ENCODE measurements at regions of chr6 and their contacts with region 1.

Region 1: GRCh38 chr6:33410050-33410710 is 634 bp upstream of the PHF1 start:
- DNase-seq: peak; percentile 96
- ATAC-seq: peak; percentile 94
- H3K4me3 ChIP-seq: peak overlapping the region; percentile 45 to 86 (median 85); a peak in 5 of 6 replicates
- H3K27ac ChIP-seq: peak overlapping the region; percentile 85
- H3K4me1 ChIP-seq: peaks cover 25% of the 10 kb centered on the region
- H3K27me3 ChIP-seq: no peaks in the 10 kb centered on the region
- CTCF ChIP-seq: peak; percentile 33
- EP300 ChIP-seq: no peak
- POLR2A ChIP-seq: peak in 1 of 2 experiments; percentile 10; a peak in 1 of 4 replicates
- RAD21 ChIP-seq: peak; percentile 25; the same call in 1 of the 2 replicates

Region 2: GRCh38 chr6:33075568-33076405 is 334.4 kb before region 1 on chr6 and contains the start of gene HLA-DPB1:
- CTCF ChIA-PET with region 1: no interaction called
- POLR2A ChIA-PET with region 1: no interaction called
- in situ Hi-C with region 1: no loop called
- intact Hi-C with region 1: no loop called
- DNase-seq: peak; percentile 20
- ATAC-seq: peak; percentile 89
- H3K4me3 ChIP-seq: no peak within 1 kb of the TSS
- H3K27ac ChIP-seq: no peak within 1 kb of the TSS
- H3K4me1 ChIP-seq: no peaks in the 10 kb centered on the region
- H3K27me3 ChIP-seq: peaks cover 0 to 35% of the 10 kb centered on the region in 2 experiments; a peak in 4 of 5 replicates
- CTCF ChIP-seq: no peak
- EP300 ChIP-seq: no peak
- POLR2A ChIP-seq: no peak
- RAD21 ChIP-seq: no peak
- total RNA-seq, gene HLA-DPB1: not detected in 2 replicates

Region 3: GRCh38 chr6:33356295-33356694 is 53.9 kb before region 1 on chr6:
- CTCF ChIA-PET with region 1: no interaction called
- POLR2A ChIA-PET with region 1: no interaction called
- in situ Hi-C with region 1: no loop called
- intact Hi-C with region 1: no loop called
- DNase-seq: no peak
- ATAC-seq: no peak
- H3K4me3 ChIP-seq: no peak overlapping the region
- H3K27ac ChIP-seq: no peak overlapping the region
- H3K4me1 ChIP-seq: peaks cover 15% of the 10 kb centered on the region
- H3K27me3 ChIP-seq: peaks cover 2 to 5% of the 10 kb centered on the region in 2 experiments; a peak in 4 of 5 replicates
- CTCF ChIP-seq: no peak
- EP300 ChIP-seq: no peak
- POLR2A ChIP-seq: no peak
- RAD21 ChIP-seq: no peak

Region 4: GRCh38 chr6:33372526-33373123 is 37.6 kb before region 1 on chr6:
- CTCF ChIA-PET with region 1: no interaction called
- POLR2A ChIA-PET with region 1: no interaction called
- in situ Hi-C with region 1: no loop called
- intact Hi-C with region 1: no loop called
- DNase-seq: no peak
- ATAC-seq: no peak
- H3K4me3 ChIP-seq: no peak overlapping the region
- H3K27ac ChIP-seq: no peak overlapping the region
- H3K4me1 ChIP-seq: peaks cover 14% of the 10 kb centered on the region
- H3K27me3 ChIP-seq: no peaks in the 10 kb centered on the region
- CTCF ChIP-seq: no peak
- EP300 ChIP-seq: no peak
- POLR2A ChIP-seq: no peak
- RAD21 ChIP-seq: no peak

Region 5: DNA sequence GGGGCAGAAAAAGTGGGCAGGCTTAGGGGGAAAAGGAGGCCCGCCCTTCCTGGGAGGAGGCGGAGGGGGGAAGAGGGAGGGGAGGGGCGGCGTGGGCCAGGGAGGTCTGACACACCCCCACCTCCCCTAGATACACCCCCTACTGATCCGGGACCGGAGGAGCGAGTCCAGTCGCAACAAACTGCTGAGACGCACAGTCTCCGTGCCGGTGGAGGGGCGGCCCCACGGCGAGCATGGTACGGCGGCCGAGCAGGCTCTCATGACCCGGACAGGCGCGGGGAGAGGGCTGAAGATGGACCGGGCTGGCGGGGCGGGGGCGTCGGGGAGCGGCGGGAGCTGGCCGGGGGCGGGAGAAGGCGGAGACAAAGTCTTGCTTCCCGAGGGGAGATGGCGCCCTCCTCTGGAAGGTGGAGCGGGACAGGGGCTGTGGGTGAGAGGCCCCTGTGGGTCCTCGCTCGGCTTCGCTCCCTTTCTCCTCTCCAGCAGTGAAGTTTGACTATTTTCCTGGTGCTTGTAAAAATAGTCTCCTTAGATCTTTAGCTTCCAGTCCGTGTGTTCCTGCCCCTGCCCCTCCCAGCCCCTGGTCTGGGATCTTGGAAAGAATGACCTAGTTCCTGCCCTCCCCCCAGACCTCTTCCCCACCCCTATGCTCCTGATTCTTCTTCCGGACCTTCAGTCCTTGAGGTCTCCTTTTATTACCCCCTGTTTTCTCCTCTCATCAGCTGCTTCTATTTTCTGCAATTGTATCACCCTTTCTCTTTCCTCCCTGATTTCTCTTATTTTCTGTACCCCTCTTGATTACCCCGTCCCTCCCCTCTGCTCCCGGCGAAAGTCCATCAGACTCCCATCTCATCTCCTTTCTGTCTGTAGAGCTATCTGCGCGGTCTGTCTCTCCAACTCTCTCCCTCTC is 15.7 kb after region 1 on chr6:
- CTCF ChIA-PET with region 1: no interaction called
- POLR2A ChIA-PET with region 1: interaction called, 13 read pairs
- in situ Hi-C with region 1: no loop called
- intact Hi-C with region 1: no loop called
- DNase-seq: peak; percentile 73
- ATAC-seq: peak; percentile 76
- H3K4me3 ChIP-seq: peak overlapping the region; percentile 68 to 74 (median 74)
- H3K27ac ChIP-seq: peak overlapping the region; percentile 46
- H3K4me1 ChIP-seq: peaks cover 51% of the 10 kb centered on the region
- H3K27me3 ChIP-seq: peaks cover 2 to 35% of the 10 kb centered on the region in 2 experiments; a peak in 3 of 5 replicates
- CTCF ChIP-seq: peak; percentile 84
- EP300 ChIP-seq: no peak
- POLR2A ChIP-seq: peak in 1 of 2 experiments; percentile 81; a peak in 2 of 4 replicates
- RAD21 ChIP-seq: peak; percentile 72

Region 6: GRCh38 chr6:33445119-33445603 is 35.0 kb after region 1 on chr6:
- CTCF ChIA-PET with region 1: no interaction called
- POLR2A ChIA-PET with region 1: no interaction called
- in situ Hi-C with region 1: no loop called
- intact Hi-C with region 1: no loop called
- DNase-seq: no peak
- ATAC-seq: no peak
- H3K4me3 ChIP-seq: no peak overlapping the region
- H3K27ac ChIP-seq: no peak overlapping the region
- H3K4me1 ChIP-seq: no peaks in the 10 kb centered on the region
- H3K27me3 ChIP-seq: no peaks in the 10 kb centered on the region; a peak in 1 of 5 replicates
- CTCF ChIP-seq: no peak
- EP300 ChIP-seq: no peak
- POLR2A ChIP-seq: no peak
- RAD21 ChIP-seq: no peak